ENCODE measurements at regions of chr20 and their contacts with region 1.

Region 1: GRCh38 chr20:13261460-13262301 is 40.6 kb downstream of the ISM1 start:
- DNase-seq: peak; percentile 74
- H3K4me3 Mint-ChIP-seq: no peak overlapping the region
- H3K27ac Mint-ChIP-seq: no peak overlapping the region
- H3K4me1 Mint-ChIP-seq: peaks cover 10% of the 10 kb centered on the region
- H3K27me3 Mint-ChIP-seq: no peaks in the 10 kb centered on the region

Region 2: DNA sequence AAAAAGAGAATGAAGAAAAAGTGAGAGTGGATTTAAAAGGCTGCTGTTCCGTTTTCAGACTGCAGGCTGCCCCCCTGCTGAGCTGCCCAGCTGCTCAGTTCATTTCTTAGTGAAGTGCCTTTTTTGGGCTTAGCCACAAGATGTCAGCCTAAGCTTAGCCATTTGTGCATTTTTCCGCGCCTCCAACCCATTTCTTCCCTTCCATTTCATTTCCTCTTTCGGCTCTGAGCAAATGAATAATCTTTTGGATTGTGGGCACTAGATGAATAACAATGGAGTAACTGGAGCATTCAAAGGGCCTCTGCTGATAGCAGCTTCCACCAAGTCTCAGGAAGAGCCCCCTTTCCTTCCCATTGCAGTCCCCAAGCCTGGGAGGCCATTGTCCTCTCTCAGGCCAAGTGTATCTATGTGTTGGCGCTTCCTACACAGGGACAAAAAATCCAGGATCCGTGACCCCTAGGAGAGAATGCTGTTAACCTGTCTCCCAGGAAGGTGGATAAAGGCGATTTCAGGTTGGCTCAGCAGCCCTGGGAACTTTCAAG is 336.4 kb before region 1 on chr20:
- CTCF ChIA-PET with region 1: interaction called, 4 read pairs
- intact Hi-C with region 1: loop called (anchors 2 kb)
- DNase-seq: peak; percentile 48
- H3K4me3 Mint-ChIP-seq: no peak overlapping the region
- H3K27ac Mint-ChIP-seq: no peak overlapping the region
- H3K4me1 Mint-ChIP-seq: no peaks in the 10 kb centered on the region
- H3K27me3 Mint-ChIP-seq: peaks cover 10% of the 10 kb centered on the region

Region 3: GRCh38 chr20:13119583-13119982 is 142.1 kb before region 1 on chr20:
- CTCF ChIA-PET with region 1: interaction called, 45 read pairs
- intact Hi-C with region 1: loop called (anchors 1 kb)
- DNase-seq: peak; percentile 43
- H3K4me3 Mint-ChIP-seq: no peak overlapping the region
- H3K27ac Mint-ChIP-seq: no peak overlapping the region
- H3K4me1 Mint-ChIP-seq: no peaks in the 10 kb centered on the region
- H3K27me3 Mint-ChIP-seq: no peaks in the 10 kb centered on the region

Region 4: GRCh38 chr20:13221673-13222318 is 39.9 kb before region 1 on chr20:
- CTCF ChIA-PET with region 1: interaction called, 4 read pairs
- intact Hi-C with region 1: loop called (anchors 1 kb)
- DNase-seq: peak; percentile 65
- H3K4me3 Mint-ChIP-seq: peak overlapping the region; percentile 73
- H3K27ac Mint-ChIP-seq: no peak overlapping the region
- H3K4me1 Mint-ChIP-seq: peaks cover 10% of the 10 kb centered on the region
- H3K27me3 Mint-ChIP-seq: peaks cover 27% of the 10 kb centered on the region

Region 5: GRCh38 chr20:14055127-14055742 is 793.6 kb after region 1 on chr20:
- CTCF ChIA-PET with region 1: no interaction called
- intact Hi-C with region 1: loop called (anchors 10 kb)
- DNase-seq: peak; percentile 23
- H3K4me3 Mint-ChIP-seq: no peak overlapping the region
- H3K27ac Mint-ChIP-seq: no peak overlapping the region
- H3K4me1 Mint-ChIP-seq: no peaks in the 10 kb centered on the region
- H3K27me3 Mint-ChIP-seq: peaks cover 2% of the 10 kb centered on the region

Measured in activated naive CD4-positive, alpha-beta T cell treated with anti-CD3 and anti-CD28 coated beads for 36 hours (primary cell).